T-cell (primary cell): ENCODE measurements at regions of chr9 and their contacts with region 1.

Region 1: GRCh38 chr9:4866239-4866969 is 73.7 kb downstream of the RCL1 start:
- DNase-seq: no peak
- ATAC-seq: peak in 1 of 4 experiments; percentile 30
- H3K4me3 ChIP-seq: no peak overlapping the region
- H3K4me3 Mint-ChIP-seq: no peak overlapping the region
- H3K27ac ChIP-seq: no peak overlapping the region
- H3K27ac Mint-ChIP-seq: no peak overlapping the region
- H3K4me1 ChIP-seq: no peaks in the 10 kb centered on the region
- H3K4me1 Mint-ChIP-seq: peaks cover 0 to 9% (median 0%) of the 10 kb centered on the region in 3 donors
- H3K27me3 ChIP-seq: no peaks in the 10 kb centered on the region
- H3K27me3 Mint-ChIP-seq: no peaks in the 10 kb centered on the region

Region 2: GRCh38 chr9:4787876-4788275 is 78.5 kb before region 1 on chr9:
- CTCF ChIA-PET with region 1: no interaction called
- POLR2A ChIA-PET with region 1: no interaction called
- DNase-seq: no peak
- ATAC-seq: no peak
- H3K4me3 ChIP-seq: no peak overlapping the region
- H3K4me3 Mint-ChIP-seq: no peak overlapping the region
- H3K27ac ChIP-seq: no peak overlapping the region
- H3K27ac Mint-ChIP-seq: no peak overlapping the region
- H3K4me1 ChIP-seq: peaks cover 5 to 9% of the 10 kb centered on the region in 2 experiments
- H3K4me1 Mint-ChIP-seq: peaks cover 11 to 13% (median 12%) of the 10 kb centered on the region in 3 donors
- H3K27me3 ChIP-seq: peaks cover 0 to 9% of the 10 kb centered on the region in 2 experiments
- H3K27me3 Mint-ChIP-seq: peaks cover 3 to 11% of the 10 kb centered on the region in 2 donors

Region 3: GRCh38 chr9:4970970-4971641 is 104.7 kb after region 1 on chr9:
- CTCF ChIA-PET with region 1: interaction called in 1 of 2 experiments, 10 read pairs
- POLR2A ChIA-PET with region 1: interaction called in 1 of 2 experiments, 3 read pairs
- DNase-seq: peak in 18 of 35 experiments; percentile 2 to 51 (median 10)
- ATAC-seq: peak; percentile 57 to 85 (median 68)
- H3K4me3 ChIP-seq: peak overlapping the region in 1 of 2 donors; percentile 13
- H3K4me3 Mint-ChIP-seq: no peak overlapping the region
- H3K27ac ChIP-seq: no peak overlapping the region
- H3K27ac Mint-ChIP-seq: no peak overlapping the region
- H3K4me1 ChIP-seq: peaks cover 6 to 10% of the 10 kb centered on the region in 2 experiments
- H3K4me1 Mint-ChIP-seq: peaks cover 0 to 3% (median 0%) of the 10 kb centered on the region in 3 donors
- H3K27me3 ChIP-seq: peaks cover 0 to 3% of the 10 kb centered on the region in 2 experiments
- H3K27me3 Mint-ChIP-seq: no peaks in the 10 kb centered on the region